ENCODE measurements at regions of chr7 and their contacts with region 1.

Region 1: DNA sequence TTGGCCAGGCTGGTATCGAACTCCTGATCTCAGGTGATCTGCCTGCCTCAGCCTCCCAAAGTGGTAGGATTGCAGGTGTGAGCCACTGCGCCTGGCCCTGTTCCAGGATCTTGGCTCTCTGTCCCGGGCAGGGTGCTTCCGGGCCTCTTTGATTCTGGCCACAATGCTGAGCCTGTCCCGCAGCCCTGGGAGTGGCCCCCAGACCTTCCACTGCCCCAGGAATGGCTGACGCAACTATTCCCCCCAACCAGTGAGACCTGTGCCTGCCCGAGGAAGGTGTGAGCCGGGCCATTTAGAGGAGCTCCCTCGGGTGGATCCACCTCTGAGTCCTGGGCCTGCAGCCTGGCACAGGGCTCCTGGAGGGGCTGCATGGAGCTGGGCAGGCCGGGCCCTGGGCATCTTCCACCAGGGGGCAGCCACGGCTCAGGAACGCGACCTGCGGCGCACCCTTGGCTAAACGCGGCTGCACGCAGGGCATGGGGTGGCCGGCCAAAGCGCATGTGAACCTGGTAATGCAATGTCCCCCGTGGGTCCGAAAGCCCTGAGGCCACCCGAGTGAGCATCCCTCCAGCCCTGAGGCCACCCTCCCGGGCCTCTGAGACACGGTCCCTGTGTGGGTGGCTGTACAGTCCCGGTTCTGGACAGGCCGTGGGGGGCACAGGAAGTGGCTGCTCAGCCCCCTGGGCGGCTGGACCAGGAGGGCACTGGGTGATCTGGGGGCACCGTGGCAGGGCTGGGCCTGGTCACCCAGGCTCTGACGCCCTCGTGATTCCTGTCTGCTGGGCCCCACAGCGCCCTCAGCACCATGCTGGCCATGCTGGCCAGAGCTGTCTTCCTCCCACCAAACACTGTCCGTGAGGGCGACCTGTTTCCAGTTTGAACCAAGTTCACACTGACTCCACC is 24.8 kb downstream of the GRIFIN start:
- DNase-seq: peak; percentile 99
- H3K4me3 ChIP-seq: peak overlapping the region; percentile 29 to 52
- H3K27ac ChIP-seq: peak overlapping the region in 1 of 2 experiments; percentile 3; a peak in 1 of 4 replicates
- H3K4me1 ChIP-seq: peaks cover 0 to 8% of the 10 kb centered on the region in 2 experiments; a peak in 2 of 4 replicates
- H3K27me3 ChIP-seq: no peaks in the 10 kb centered on the region
- CTCF ChIP-seq: peak; percentile 97
- EP300 ChIP-seq: no peak
- RAD21 ChIP-seq: peak; percentile 97

Region 2: DNA sequence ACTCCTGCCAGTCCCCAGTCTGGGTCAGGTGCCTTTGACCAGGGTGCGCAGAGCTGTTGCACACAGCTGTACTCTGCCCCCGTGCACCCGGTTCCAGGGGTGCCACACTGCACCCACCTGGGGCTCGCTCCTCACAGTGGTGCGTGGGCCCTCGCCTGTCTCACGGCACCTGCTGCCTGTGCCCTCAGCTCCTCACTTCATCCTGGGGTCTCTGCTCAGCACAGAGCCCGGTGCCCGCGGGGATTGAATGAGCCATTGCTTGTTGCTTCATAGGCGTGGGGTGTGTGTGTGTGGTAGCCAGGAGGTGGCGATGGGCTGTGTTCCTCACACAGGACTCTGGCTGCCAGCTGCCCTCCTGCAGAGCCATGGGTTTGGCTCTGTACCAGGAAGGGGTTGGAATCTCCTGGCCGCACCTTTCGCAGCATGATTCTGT is 78.3 kb before region 1 on chr7:
- CTCF ChIA-PET with region 1: no interaction called
- POLR2A ChIA-PET with region 1: no interaction called
- DNase-seq: no peak
- H3K4me3 ChIP-seq: no peak overlapping the region
- H3K27ac ChIP-seq: no peak overlapping the region
- H3K4me1 ChIP-seq: no peaks in the 10 kb centered on the region
- H3K27me3 ChIP-seq: no peaks in the 10 kb centered on the region
- CTCF ChIP-seq: no peak
- EP300 ChIP-seq: no peak
- RAD21 ChIP-seq: no peak

Region 3: GRCh38 chr7:2431260-2431867 is 20.1 kb before region 1 on chr7:
- CTCF ChIA-PET with region 1: interaction called, 44 read pairs
- POLR2A ChIA-PET with region 1: interaction called, 3 read pairs
- DNase-seq: peak; percentile 57
- H3K4me3 ChIP-seq: no peak overlapping the region
- H3K27ac ChIP-seq: no peak overlapping the region
- H3K4me1 ChIP-seq: no peaks in the 10 kb centered on the region
- H3K27me3 ChIP-seq: no peaks in the 10 kb centered on the region
- CTCF ChIP-seq: peak; percentile 41
- EP300 ChIP-seq: no peak
- RAD21 ChIP-seq: no peak

Region 4: DNA sequence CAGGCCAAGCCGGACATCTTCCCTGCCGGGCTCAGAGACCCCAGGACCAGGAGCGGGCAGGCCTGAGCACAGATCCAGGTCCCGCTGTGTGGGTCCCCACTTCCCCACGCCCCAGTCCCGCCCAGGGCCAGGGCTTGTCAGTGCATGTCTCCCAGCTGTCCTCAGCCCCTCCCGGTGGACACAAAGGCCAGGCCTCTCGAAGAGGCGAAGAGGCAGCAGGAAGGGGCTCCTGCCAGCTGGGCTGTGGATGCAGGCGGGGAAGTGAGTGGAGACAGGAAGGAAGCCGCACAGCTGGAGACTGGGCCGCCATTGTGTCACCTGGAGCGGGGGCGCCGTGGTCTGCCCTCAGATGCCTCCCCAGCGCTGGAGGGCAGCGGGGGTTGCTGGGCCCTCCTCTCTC is 20.0 kb after region 1 on chr7:
- CTCF ChIA-PET with region 1: interaction called, 270 read pairs
- POLR2A ChIA-PET with region 1: interaction called, 4 read pairs
- DNase-seq: peak; percentile 64
- H3K4me3 ChIP-seq: no peak overlapping the region
- H3K27ac ChIP-seq: no peak overlapping the region
- H3K4me1 ChIP-seq: peaks cover 0 to 5% of the 10 kb centered on the region in 2 experiments; a peak in 1 of 4 replicates
- H3K27me3 ChIP-seq: no peaks in the 10 kb centered on the region
- CTCF ChIP-seq: no peak
- EP300 ChIP-seq: no peak
- RAD21 ChIP-seq: no peak

Region 5: GRCh38 chr7:2602406-2603043 is 151.1 kb after region 1 on chr7:
- CTCF ChIA-PET with region 1: interaction called, 10 read pairs
- POLR2A ChIA-PET with region 1: no interaction called
- DNase-seq: peak; percentile 45
- H3K4me3 ChIP-seq: no peak overlapping the region
- H3K27ac ChIP-seq: no peak overlapping the region
- H3K4me1 ChIP-seq: no peaks in the 10 kb centered on the region; a peak in 1 of 4 replicates
- H3K27me3 ChIP-seq: no peaks in the 10 kb centered on the region
- CTCF ChIP-seq: no peak
- EP300 ChIP-seq: no peak
- RAD21 ChIP-seq: no peak; the same call in 1 of the 2 replicates

Region 6: DNA sequence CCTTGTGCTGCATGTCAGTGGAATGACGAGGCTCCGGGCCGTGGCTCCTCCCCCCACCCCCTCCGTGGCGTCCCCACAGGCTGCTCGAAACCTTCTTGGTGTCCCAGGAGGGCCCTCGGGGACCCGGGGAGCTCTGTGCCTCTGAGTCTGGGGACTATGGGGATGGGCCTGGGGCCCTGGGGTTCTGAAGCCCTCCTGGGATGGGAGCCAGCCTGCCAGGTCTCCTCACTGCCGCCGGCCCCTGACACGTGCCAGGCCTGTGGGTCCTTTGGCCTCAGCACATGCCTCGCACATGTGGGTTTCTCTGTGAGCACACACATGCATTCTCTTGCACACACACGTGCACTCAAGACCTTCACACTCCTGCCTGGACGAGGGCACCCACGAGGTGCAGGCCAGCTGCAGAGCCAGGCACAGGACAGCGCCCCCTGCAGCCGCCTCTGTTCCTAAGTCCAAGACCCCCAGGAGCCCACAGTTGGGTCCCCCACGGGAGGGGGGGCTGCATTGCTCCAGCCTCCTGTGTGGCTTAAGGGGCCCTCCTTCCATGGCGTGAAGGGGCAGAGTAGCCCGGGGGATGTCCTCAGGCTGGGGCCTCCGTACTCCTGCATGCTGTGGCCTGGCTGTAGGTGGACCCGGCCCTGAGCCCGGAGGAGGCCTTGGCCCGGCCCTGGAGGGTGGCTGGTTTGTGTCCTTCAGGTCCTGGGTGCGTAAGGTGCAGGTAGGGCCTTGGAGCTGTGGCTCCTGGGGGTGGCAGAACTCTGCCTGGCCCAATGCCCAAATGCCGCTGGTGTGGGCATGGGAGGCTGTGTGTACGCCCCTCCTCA is 209.4 kb after region 1 on chr7:
- CTCF ChIA-PET with region 1: interaction called, 11 read pairs
- POLR2A ChIA-PET with region 1: no interaction called
- DNase-seq: peak; percentile 70
- H3K4me3 ChIP-seq: no peak overlapping the region
- H3K27ac ChIP-seq: peak overlapping the region in 1 of 2 experiments; percentile 35; a peak in 1 of 4 replicates
- H3K4me1 ChIP-seq: peaks cover 0 to 39% of the 10 kb centered on the region in 2 experiments; a peak in 1 of 4 replicates
- H3K27me3 ChIP-seq: no peaks in the 10 kb centered on the region
- CTCF ChIP-seq: peak; percentile 61
- EP300 ChIP-seq: no peak
- RAD21 ChIP-seq: peak; percentile 24; the same call in 1 of the 2 replicates

Region 7: DNA sequence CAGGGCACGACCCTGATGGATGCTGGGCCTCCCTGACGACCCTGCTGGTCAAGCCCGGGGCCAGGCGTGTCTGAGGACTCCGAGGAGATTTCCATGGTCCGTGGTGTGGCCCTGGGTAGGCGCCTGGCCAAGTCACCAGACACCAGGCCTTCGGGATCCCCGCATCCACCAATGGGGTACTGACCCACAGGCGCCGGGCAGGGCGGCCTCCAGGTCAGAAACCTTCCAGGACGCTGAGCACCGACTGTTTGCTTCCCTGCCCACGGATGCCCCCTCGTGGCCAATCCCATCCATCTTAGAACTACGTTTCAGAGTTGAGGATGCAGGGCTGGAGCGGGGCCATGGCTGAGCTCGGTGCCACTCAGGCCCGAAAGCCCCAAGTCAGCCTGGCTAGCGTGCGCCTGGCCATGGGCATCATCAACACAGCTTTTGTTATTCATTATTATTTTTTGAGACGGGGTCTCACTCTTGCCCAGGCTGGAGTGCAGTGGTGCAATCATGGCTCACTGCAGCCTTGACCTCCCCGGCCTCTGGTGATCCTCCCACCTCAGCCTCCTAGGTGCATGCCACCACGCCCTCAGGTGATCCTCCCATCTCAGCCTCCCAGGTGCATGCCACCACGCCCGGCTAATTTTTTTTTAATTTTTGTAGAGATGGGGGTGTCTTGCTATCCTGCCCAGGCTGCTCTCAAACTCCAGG is 229.5 kb after region 1 on chr7:
- CTCF ChIA-PET with region 1: interaction called, 77 read pairs
- POLR2A ChIA-PET with region 1: no interaction called
- DNase-seq: peak; percentile 94
- H3K4me3 ChIP-seq: no peak overlapping the region; a peak in 1 of 4 replicates
- H3K27ac ChIP-seq: no peak overlapping the region
- H3K4me1 ChIP-seq: peaks cover 0 to 3% of the 10 kb centered on the region in 2 experiments; a peak in 1 of 4 replicates
- H3K27me3 ChIP-seq: peaks cover 11% of the 10 kb centered on the region; the same call in 1 of the 2 replicates
- CTCF ChIP-seq: peak; percentile 76
- EP300 ChIP-seq: no peak
- RAD21 ChIP-seq: peak; percentile 82

Region 8: DNA sequence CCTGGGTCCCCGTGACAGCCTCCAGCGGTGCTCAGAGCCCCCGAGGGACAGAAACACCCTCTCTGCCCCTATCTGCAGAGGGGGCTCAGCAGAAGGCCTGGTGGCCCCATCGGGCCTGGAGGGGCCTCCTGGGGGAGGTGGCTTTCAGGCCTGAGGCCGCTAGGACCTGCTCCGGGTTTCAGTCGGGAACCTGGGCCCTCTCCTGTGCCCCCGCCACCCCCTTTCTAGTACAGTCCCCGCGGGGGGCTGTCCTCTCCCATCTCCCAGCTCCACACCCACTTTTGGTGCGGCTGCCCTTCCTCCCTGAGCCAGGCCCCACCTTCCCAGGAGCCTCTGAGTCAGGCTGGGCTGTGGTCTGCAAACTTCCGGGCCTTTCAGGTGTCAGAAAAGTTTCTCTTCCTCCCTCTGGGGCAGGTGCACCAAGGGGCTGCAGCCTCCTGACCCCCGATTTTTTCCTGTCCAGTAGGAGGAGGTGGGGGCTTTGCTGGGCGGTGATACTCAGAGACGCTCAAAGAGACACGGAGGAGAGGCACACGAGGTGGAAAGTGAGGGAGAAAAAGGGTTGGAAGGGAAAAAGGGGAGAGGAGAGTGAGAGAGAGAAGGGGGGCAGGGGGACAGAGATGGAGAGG is 591.6 kb after region 1 on chr7:
- CTCF ChIA-PET with region 1: no interaction called
- POLR2A ChIA-PET with region 1: no interaction called
- DNase-seq: no peak
- H3K4me3 ChIP-seq: no peak overlapping the region
- H3K27ac ChIP-seq: no peak overlapping the region
- H3K4me1 ChIP-seq: no peaks in the 10 kb centered on the region; a peak in 1 of 4 replicates
- H3K27me3 ChIP-seq: no peaks in the 10 kb centered on the region
- CTCF ChIP-seq: no peak
- EP300 ChIP-seq: no peak
- RAD21 ChIP-seq: no peak

Region 9: GRCh38 chr7:3120513-3120912 is 669.1 kb after region 1 on chr7:
- CTCF ChIA-PET with region 1: no interaction called
- POLR2A ChIA-PET with region 1: no interaction called
- DNase-seq: no peak
- H3K4me3 ChIP-seq: no peak overlapping the region
- H3K27ac ChIP-seq: no peak overlapping the region
- H3K4me1 ChIP-seq: peaks cover 0 to 2% of the 10 kb centered on the region in 2 experiments; a peak in 1 of 4 replicates
- H3K27me3 ChIP-seq: no peaks in the 10 kb centered on the region
- CTCF ChIP-seq: no peak
- EP300 ChIP-seq: no peak
- RAD21 ChIP-seq: no peak

Measured in SK-N-SH (cell line).